ENCODE measurements at regions of chr4 and their contacts with region 1.

Region 1: GRCh38 chr4:184983672-184984356 is 34.5 kb upstream of the HELT start:
- DNase-seq: peak; percentile 71

Region 2: GRCh38 chr4:184613405-184613804 is 370.4 kb before region 1 on chr4:
- in situ Hi-C with region 1: no loop called
- DNase-seq: peak; percentile 33

Region 3: DNA sequence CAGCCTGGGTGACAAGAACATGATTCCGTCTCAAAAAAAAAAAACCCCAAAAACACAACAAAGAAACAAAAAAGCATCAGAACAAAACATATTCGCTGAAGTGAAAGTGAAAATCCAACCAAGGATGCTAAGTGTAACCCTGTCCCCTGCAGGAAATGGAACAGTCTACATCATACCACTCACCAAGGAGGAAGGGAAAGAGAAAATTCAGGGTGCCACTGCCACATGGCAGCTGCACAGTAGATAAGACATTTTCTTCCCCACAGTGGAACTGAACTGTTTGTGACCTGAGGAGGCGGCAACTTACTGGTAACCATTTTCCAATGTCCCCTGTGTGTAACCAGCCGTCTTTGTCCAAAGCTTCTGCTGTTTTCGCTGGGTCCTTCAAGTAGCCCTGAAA is 221.7 kb before region 1 on chr4:
- in situ Hi-C with region 1: loop called (anchors 25 kb)
- DNase-seq: no peak